Dendritic cell treated with granulocyte-macrophage colony-stimulating factor and Interleukin-4, amounts not matched to agents 40 ng/mL and 50 ng/mL, for 4 days (primary cell): ENCODE measurements at regions of chr1 and their contacts with region 1.

Region 1: DNA sequence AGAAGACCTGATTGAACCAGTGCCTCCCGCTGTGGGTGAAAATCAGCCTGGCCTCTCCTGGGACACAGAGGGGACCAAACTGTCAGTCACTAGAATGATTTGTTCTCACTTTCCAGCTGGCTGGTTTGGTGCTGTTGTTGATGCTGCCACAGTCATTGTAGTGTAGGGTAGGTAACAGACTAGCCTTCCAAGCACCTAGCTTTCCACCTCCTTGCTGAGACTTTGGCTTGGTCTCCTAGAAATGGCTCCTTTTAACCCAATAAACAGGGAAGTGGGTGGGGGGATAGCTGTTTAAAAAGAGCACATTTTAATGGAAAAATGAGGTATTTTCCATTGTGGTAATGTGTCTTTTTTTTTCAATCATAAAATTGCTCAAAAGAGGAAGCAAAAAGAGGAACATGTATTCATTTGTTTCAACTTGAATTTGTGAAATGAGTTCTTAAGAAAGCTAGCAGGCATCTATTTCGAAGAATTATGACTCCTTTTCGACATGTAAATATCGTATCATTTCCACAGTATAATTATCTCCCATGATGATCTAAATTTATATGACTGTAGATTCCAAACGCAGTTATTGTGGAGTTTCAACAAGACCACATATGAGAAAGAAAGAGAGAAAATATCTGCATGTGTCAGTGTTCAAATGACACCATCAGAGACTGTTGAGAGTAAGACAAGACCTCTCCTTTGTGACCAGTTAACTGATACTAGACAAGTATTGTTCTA is 190.1 kb downstream of the HLX start:
- H3K4me3 Mint-ChIP-seq: peak overlapping the region; percentile 20
- H3K27ac Mint-ChIP-seq: peak overlapping the region; percentile 95
- H3K4me1 Mint-ChIP-seq: peaks cover 82% of the 10 kb centered on the region
- H3K27me3 Mint-ChIP-seq: peaks cover 2% of the 10 kb centered on the region

Region 2: DNA sequence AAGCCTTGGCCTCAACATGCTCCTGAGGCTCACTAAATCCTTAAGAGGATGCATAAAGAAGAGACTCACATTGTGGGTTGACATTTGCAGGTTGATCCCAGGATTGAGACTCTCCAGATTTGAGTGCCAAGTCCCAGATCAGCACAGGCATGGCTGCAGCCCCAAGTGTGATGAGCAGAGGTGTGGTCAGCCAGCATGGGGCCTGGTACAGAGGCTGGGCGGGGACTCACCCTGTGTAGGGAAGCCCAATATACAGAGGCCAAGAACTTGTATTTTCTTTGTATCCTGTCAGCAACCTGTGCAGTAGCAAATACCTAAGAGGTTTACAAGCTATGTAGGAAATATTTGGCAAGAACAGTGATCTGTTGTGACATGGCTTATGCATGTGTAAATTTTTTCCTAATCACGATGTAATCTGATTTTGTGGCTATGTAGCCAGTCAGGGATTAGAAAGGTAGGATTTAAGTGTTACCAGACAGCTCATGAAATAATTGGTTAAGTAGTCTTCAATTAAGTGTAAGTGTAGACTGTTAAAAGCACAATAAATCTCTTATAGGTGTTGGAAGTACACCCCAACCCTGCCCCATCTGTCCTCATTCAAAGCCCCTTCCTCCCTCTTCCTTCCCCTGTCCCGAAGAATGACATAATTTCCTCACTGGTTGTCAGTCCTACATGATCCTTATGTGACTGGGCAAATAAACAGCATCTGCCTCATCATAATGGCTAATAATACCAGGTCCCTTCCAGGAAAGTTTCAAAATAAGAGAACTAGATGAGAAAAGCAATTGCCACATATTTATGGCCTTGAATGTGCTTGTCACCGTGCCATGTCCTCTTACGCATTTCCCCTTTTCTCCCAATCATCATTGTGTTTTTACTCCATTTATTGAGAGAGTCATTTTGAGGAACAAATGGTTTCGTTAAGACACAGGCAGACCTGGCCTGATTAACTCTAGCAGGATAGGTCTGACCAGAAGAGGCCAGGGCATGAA is 69.2 kb before region 1 on chr1:
- intact Hi-C with region 1: loop called (anchors 1 kb)
- H3K4me3 Mint-ChIP-seq: no peak overlapping the region
- H3K27ac Mint-ChIP-seq: no peak overlapping the region
- H3K4me1 Mint-ChIP-seq: no peaks in the 10 kb centered on the region
- H3K27me3 Mint-ChIP-seq: peaks cover 23% of the 10 kb centered on the region

Region 3: GRCh38 chr1:221045842-221046831 is 23.2 kb before region 1 on chr1:
- intact Hi-C with region 1: loop called (anchors 1 kb)
- H3K4me3 Mint-ChIP-seq: no peak overlapping the region
- H3K27ac Mint-ChIP-seq: peak overlapping the region; percentile 91
- H3K4me1 Mint-ChIP-seq: peaks cover 56% of the 10 kb centered on the region
- H3K27me3 Mint-ChIP-seq: no peaks in the 10 kb centered on the region

Region 4: DNA sequence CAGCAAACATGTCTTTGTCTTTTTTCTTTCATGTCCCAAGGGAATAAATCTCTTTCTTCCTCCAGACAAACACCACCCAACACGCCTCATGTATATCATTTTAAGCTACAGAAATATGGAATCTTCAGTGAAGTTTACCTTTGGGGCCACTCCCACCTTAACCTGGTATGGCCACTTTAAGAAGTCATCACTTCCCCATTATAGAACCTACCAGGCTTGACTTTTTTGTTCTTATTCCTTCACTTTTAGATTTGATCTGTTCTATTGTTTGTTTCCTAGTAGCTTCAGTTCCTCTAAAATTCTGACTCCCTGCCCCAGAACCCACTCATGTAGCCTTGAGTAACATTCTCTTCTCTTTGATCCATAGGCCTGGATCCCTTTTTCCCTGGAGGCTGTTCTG is 36.2 kb after region 1 on chr1:
- intact Hi-C with region 1: no loop called
- H3K4me3 Mint-ChIP-seq: no peak overlapping the region
- H3K27ac Mint-ChIP-seq: peak overlapping the region; percentile 7
- H3K4me1 Mint-ChIP-seq: peaks cover 70% of the 10 kb centered on the region
- H3K27me3 Mint-ChIP-seq: peaks cover 4% of the 10 kb centered on the region

Region 5: DNA sequence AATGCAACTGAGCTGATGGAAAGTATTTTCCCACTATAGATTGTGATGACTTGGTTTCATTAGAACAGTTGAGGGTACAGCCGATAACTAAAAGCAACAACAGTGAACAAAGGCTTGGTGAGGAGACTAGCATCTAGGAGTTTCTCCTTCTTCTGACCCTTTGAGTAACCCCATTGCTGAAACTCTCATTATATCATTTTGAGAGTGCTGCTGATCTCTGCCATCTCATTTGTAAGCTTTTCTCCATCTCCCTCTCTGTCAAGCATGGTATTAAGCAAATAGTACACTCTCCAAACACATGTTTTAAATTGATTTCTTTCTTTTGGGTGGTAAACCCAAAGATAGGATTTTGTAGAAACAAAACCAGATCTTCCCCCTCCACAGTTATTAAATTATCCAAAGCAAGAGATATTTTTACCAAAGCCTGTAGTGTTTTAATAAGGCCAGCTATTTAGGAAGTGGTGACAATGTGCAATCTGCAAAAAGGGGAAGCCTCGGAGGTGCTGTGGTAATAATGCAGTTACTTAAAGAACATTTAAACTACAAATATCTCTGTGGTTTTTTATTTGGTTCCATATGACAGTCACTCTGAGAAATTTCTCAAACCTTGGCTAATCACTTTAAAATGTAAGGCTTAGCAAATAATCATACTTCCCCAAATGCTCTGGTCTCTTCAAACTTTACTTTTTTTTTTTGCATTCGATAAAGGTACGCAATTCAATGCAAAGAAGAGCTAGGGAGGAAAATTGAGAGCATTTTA is 97.4 kb after region 1 on chr1:
- intact Hi-C with region 1: loop called (anchors 2 kb)
- H3K4me3 Mint-ChIP-seq: no peak overlapping the region
- H3K27ac Mint-ChIP-seq: peak overlapping the region; percentile 81
- H3K4me1 Mint-ChIP-seq: peaks cover 58% of the 10 kb centered on the region
- H3K27me3 Mint-ChIP-seq: peaks cover 48% of the 10 kb centered on the region